CD4-positive, alpha-beta T cell (primary cell): ENCODE measurements at regions of chr21 and their contacts with region 1.

Region 1: DNA sequence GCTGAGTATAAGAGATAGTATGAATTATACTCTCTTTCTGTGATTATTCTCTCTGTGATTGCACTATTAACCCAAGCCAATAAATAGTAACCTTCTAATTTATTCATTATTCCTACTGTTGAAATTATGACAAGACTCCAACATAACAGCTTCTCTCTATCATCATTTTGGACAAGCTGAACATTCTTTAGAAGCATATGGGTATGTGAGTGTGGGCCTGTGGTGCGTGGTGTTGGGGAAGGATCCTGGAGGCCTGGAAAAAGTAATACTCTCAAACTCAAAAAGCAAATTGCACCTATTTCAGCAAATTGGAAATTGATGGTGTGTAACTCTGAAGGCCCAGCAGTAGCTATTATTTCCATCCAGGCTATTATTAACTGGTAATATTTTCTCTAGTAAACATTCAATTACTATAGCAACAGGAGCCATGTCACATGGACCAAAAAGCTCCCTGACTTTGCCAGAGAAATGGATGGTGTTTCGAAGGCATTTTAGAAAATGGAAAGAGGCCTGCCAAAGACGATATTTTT is 502.8 kb downstream of the LTN1 start:
- DNase-seq: no peak
- ATAC-seq: no peak
- H3K4me3 ChIP-seq: no peak overlapping the region
- H3K4me3 Mint-ChIP-seq: no peak overlapping the region
- H3K27ac ChIP-seq: no peak overlapping the region
- H3K27ac Mint-ChIP-seq: no peak overlapping the region
- H3K4me1 ChIP-seq: no peaks in the 10 kb centered on the region
- H3K4me1 Mint-ChIP-seq: no peaks in the 10 kb centered on the region
- H3K27me3 ChIP-seq: no peaks in the 10 kb centered on the region
- H3K27me3 Mint-ChIP-seq: no peaks in the 10 kb centered on the region
- CTCF ChIP-seq: no peak

Region 2: GRCh38 chr21:28540514-28540913 is 50.6 kb after region 1 on chr21:
- CTCF ChIA-PET with region 1: no interaction called
- POLR2A ChIA-PET with region 1: no interaction called
- intact Hi-C with region 1: loop called in 1 of 2 experiments (anchors 10 kb)
- DNase-seq: no peak
- ATAC-seq: no peak
- H3K4me3 ChIP-seq: no peak overlapping the region
- H3K4me3 Mint-ChIP-seq: no peak overlapping the region
- H3K27ac ChIP-seq: no peak overlapping the region
- H3K27ac Mint-ChIP-seq: no peak overlapping the region
- H3K4me1 ChIP-seq: no peaks in the 10 kb centered on the region
- H3K4me1 Mint-ChIP-seq: no peaks in the 10 kb centered on the region
- H3K27me3 ChIP-seq: no peaks in the 10 kb centered on the region
- H3K27me3 Mint-ChIP-seq: peaks cover 11% of the 10 kb centered on the region
- CTCF ChIP-seq: no peak